Activated CD4-positive, alpha-beta T cell treated with anti-CD3 and anti-CD28 coated beads for 36 hours (primary cell): ENCODE measurements at regions of chr4 and their contacts with region 1.

Region 1: DNA sequence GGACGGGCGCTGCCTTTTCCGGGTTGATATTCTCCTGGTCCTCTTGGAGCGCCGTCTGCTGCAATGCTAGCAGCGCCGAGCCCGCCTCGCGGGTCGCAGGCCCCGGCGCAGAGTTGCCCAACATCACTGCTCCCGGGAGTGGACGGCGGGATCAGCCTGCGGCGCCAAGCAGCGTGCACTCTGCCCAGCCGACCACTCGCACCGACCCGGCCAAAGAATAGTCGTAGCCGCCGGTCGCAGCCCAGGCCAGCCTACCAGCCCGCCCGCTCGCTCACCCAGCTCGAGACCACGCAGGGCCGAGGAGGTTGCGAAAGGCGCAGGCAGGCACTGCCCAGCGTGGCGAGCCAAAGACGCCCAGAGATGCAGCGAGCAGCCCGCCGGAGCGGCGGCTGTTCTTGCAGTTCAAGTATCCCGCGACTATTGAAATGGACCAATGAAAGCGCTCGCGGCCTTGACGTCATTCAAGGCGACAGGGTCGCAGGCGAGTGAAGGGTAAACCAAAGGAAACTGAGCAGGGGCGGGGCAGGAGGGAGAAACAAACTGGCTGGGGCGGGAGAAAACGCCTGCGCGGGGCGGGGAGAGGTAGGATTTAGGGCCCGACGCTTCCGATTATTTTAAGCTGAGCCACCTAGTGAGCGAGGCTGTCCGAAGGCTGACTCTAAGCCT is at the start of gene CCNA2:
- DNase-seq: peak; percentile 98
- ATAC-seq: peak; percentile 97
- H3K4me3 Mint-ChIP-seq: peak within 1 kb of the TSS; percentile 97
- H3K27ac Mint-ChIP-seq: peak within 1 kb of the TSS; percentile 88
- H3K4me1 Mint-ChIP-seq: peaks cover 16% of the 10 kb centered on the region
- H3K27me3 Mint-ChIP-seq: no peaks in the 10 kb centered on the region
- total RNA-seq, gene CCNA2: 113 to 118 TPM

Region 2: GRCh38 chr4:121869841-121870656 is 46.4 kb after region 1 on chr4 and contains the start of gene BBS7:
- CTCF ChIA-PET with region 1: interaction called, 6 read pairs
- POLR2A ChIA-PET with region 1: no interaction called
- intact Hi-C with region 1: loop called (anchors 1 kb)
- DNase-seq: peak; percentile 98
- ATAC-seq: peak; percentile 99
- H3K4me3 Mint-ChIP-seq: peak within 1 kb of the TSS; percentile 91
- H3K27ac Mint-ChIP-seq: peak within 1 kb of the TSS; percentile 83
- H3K4me1 Mint-ChIP-seq: peaks cover 17% of the 10 kb centered on the region
- H3K27me3 Mint-ChIP-seq: peaks cover 6% of the 10 kb centered on the region
- total RNA-seq, gene BBS7: 15.0 to 16.3 TPM